H1 (cell line): ENCODE measurements at regions of chr3 and their contacts with region 1.

Region 1: DNA sequence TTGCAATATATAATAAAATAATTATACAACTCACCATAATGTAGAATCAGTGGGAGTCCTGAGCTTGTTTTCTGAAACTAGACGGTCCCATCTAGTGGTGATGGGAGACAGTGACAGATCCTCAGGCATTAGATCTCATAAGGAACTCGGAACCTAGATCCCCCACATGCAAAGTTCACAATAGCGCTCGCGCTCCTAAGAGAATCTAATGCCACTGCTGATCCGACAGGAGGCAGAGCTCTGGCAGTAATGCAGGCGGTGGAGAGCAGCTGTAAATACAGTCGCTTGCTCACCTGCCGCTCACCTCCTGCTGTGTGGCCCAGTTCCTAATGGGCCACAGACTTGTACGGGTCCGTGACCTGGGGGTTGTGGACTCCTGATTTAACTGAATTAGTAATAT is 87.8 kb downstream of the P3H2 start:
- DNase-seq: peak in 1 of 2 experiments; percentile 43
- H3K4me3 ChIP-seq: no peak overlapping the region
- H3K27ac ChIP-seq: no peak overlapping the region
- H3K4me1 ChIP-seq: peaks cover 0 to 3% (median under 1%) of the 10 kb centered on the region in 4 experiments; a peak in 4 of 7 replicates
- H3K27me3 ChIP-seq: no peaks in the 10 kb centered on the region
- CTCF ChIP-seq: peak; percentile 29 to 55 (median 54)
- EP300 ChIP-seq: no peak
- POLR2A ChIP-seq: no peak
- RAD21 ChIP-seq: peak; percentile 41 to 60

Region 2: GRCh38 chr3:189967254-189967865 is 65.6 kb before region 1 on chr3:
- CTCF ChIA-PET with region 1: interaction called, 27 read pairs
- POLR2A ChIA-PET with region 1: no interaction called
- DNase-seq: no peak
- H3K4me3 ChIP-seq: no peak overlapping the region
- H3K27ac ChIP-seq: no peak overlapping the region
- H3K4me1 ChIP-seq: peaks cover 0 to under 1% (median 0%) of the 10 kb centered on the region in 4 experiments; a peak in 3 of 7 replicates
- H3K27me3 ChIP-seq: no peaks in the 10 kb centered on the region
- CTCF ChIP-seq: peak in 2 of 3 experiments; percentile 62 to 73; a peak in 2 of 4 replicates
- EP300 ChIP-seq: no peak
- POLR2A ChIP-seq: no peak
- RAD21 ChIP-seq: peak; percentile 89 to 92

Region 3: GRCh38 chr3:190019840-190020239 is 13.1 kb before region 1 on chr3:
- CTCF ChIA-PET with region 1: interaction called, 11 read pairs
- POLR2A ChIA-PET with region 1: interaction called, 3 read pairs
- DNase-seq: no peak
- H3K4me3 ChIP-seq: no peak overlapping the region
- H3K27ac ChIP-seq: no peak overlapping the region
- H3K4me1 ChIP-seq: peaks cover 0 to 19% (median 7%) of the 10 kb centered on the region in 4 experiments; a peak in 6 of 7 replicates
- H3K27me3 ChIP-seq: no peaks in the 10 kb centered on the region
- CTCF ChIP-seq: no peak
- EP300 ChIP-seq: no peak
- POLR2A ChIP-seq: no peak
- RAD21 ChIP-seq: peak in 1 of 2 experiments; percentile 8; a peak in 1 of 4 replicates

Region 4: GRCh38 chr3:190048932-190049441 is 16.1 kb after region 1 on chr3:
- CTCF ChIA-PET with region 1: interaction called, 17 read pairs
- POLR2A ChIA-PET with region 1: interaction called, 3 read pairs
- DNase-seq: no peak
- H3K4me3 ChIP-seq: no peak overlapping the region
- H3K27ac ChIP-seq: no peak overlapping the region
- H3K4me1 ChIP-seq: peaks cover 0 to 32% (median 12%) of the 10 kb centered on the region in 4 experiments; a peak in 4 of 7 replicates
- H3K27me3 ChIP-seq: no peaks in the 10 kb centered on the region
- CTCF ChIP-seq: no peak
- EP300 ChIP-seq: no peak
- POLR2A ChIP-seq: no peak
- RAD21 ChIP-seq: no peak

Region 5: GRCh38 chr3:190092250-190092649 is 59.3 kb after region 1 on chr3:
- CTCF ChIA-PET with region 1: no interaction called
- POLR2A ChIA-PET with region 1: no interaction called
- DNase-seq: no peak
- H3K4me3 ChIP-seq: no peak overlapping the region
- H3K27ac ChIP-seq: no peak overlapping the region
- H3K4me1 ChIP-seq: peaks cover 0 to 5% (median under 1%) of the 10 kb centered on the region in 4 experiments; a peak in 3 of 7 replicates
- H3K27me3 ChIP-seq: no peaks in the 10 kb centered on the region
- CTCF ChIP-seq: no peak
- EP300 ChIP-seq: no peak
- POLR2A ChIP-seq: no peak
- RAD21 ChIP-seq: no peak

Region 6: DNA sequence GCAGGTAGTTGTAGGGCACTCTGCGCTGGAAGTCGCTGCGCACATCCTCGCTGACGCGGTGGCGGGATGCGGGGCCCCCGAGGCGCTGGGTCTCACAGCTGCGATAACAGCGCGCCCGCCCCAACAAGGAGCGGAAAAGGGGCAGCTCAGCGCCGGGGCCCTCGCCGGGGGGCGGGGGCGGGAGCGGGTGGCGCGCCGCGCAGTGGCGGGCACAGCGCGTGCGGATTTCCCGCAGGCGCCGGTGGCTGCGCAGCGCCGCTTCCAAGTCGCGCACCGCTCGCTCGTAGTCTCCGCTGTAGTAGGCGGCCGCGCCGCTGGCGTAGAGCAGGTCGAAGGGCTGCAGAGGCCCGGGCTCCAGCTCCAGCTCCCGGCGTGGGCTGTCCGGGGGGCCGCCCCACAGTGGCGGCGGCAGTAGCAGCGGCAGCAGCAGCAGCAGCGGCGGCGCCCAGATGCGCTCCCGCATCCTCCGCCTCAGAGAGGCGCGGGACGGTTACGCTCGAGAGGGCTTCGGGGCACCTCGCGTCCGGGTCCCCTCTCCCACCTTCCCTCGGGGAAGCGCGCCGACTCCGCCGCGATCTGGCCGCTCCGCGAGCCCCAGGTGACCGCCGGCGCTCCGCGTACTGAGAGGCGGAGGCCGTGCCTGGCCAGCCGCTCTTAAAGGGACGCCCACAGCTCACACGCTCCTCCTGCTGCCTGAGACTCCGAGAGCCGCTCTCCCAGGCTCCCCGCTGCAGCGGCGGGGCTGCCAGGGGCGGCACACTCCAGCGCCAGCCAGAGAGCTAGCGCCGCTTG is 87.5 kb after region 1 on chr3 and contains the start of gene P3H2:
- CTCF ChIA-PET with region 1: interaction called, 24 read pairs
- POLR2A ChIA-PET with region 1: no interaction called
- DNase-seq: peak; percentile 82 to 84
- H3K4me3 ChIP-seq: peak within 1 kb of the TSS; percentile 55 to 76 (median 69)
- H3K27ac ChIP-seq: 0 out of 2 replicates have a peak within 1 kb of the TSS, but pooled peaks have one; percentile 8
- H3K4me1 ChIP-seq: peaks cover 0 to 16% (median 13%) of the 10 kb centered on the region in 4 experiments; a peak in 6 of 7 replicates
- H3K27me3 ChIP-seq: peaks cover 0 to 6% (median 1%) of the 10 kb centered on the region in 4 experiments; a peak in 4 of 7 replicates
- CTCF ChIP-seq: peak in 2 of 3 experiments; percentile 45 to 61; a peak in 3 of 4 replicates
- EP300 ChIP-seq: no peak
- POLR2A ChIP-seq: peak in 1 of 2 experiments; percentile 65; a peak in 1 of 3 replicates
- RAD21 ChIP-seq: peak; percentile 59 to 72
- total RNA-seq, gene P3H2: 40.5 and 48.6 TPM in 2 replicates